ENCODE measurements at regions of chr11 and their contacts with region 1.

Region 1: GRCh38 chr11:85627998-85628770 is at the start of gene TMEM126B:
- DNase-seq: peak; percentile 99
- ATAC-seq: peak; percentile 95
- H3K4me3 Mint-ChIP-seq: peak within 1 kb of the TSS; percentile 98
- H3K27ac Mint-ChIP-seq: peak within 1 kb of the TSS; percentile 100
- H3K4me1 Mint-ChIP-seq: peaks cover 35% of the 10 kb centered on the region
- H3K27me3 Mint-ChIP-seq: no peaks in the 10 kb centered on the region
- total RNA-seq, gene TMEM126B: 62.7 to 74.2 TPM

Region 2: DNA sequence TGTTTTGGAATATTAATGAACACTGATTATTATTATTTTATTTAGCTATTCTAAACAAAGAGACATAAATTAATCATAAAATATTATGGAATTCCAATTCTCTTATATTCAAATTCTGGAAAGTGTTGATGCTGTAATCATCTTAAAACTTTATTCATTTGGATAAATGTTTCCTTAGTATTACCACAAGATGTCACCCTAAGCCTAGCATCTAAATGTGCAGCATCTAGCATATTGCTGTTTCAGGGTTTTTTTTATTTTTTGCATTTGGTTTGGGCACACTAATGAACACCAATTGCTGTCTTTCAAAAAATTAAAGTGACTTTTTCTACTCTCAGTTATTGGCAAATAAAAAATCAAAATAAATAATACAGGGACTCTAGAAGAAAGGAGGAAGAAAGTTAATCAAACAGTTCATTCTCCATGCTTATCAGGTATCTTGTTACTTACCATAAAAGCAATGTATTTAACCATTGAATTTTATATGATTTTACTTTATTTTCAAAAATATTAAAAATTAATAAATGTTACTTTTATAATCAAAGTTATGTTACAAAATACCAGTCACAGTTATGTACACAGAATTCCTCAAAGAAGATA is 32.8 kb before region 1 on chr11:
- CTCF ChIA-PET with region 1: interaction called, 6 read pairs
- POLR2A ChIA-PET with region 1: no interaction called
- intact Hi-C with region 1: loop called (anchors 1 to 2 kb)
- DNase-seq: no peak
- ATAC-seq: peak; percentile 64
- H3K4me3 Mint-ChIP-seq: no peak overlapping the region
- H3K27ac Mint-ChIP-seq: no peak overlapping the region
- H3K4me1 Mint-ChIP-seq: no peaks in the 10 kb centered on the region
- H3K27me3 Mint-ChIP-seq: peaks cover 2% of the 10 kb centered on the region

Region 3: GRCh38 chr11:85752890-85753581 is 124.9 kb after region 1 on chr11:
- CTCF ChIA-PET with region 1: no interaction called
- POLR2A ChIA-PET with region 1: no interaction called
- intact Hi-C with region 1: loop called (anchors 2 kb)
- DNase-seq: peak; percentile 90
- ATAC-seq: peak; percentile 89
- H3K4me3 Mint-ChIP-seq: peak overlapping the region; percentile 47
- H3K27ac Mint-ChIP-seq: peak overlapping the region; percentile 94
- H3K4me1 Mint-ChIP-seq: peaks cover 91% of the 10 kb centered on the region
- H3K27me3 Mint-ChIP-seq: no peaks in the 10 kb centered on the region

Region 4: GRCh38 chr11:86302100-86302793 is 674.1 kb after region 1 on chr11 and contains the start of gene HIKESHI:
- CTCF ChIA-PET with region 1: no interaction called
- POLR2A ChIA-PET with region 1: no interaction called
- intact Hi-C with region 1: loop called (anchors 1 to 10 kb)
- DNase-seq: peak; percentile 97
- ATAC-seq: peak; percentile 99
- H3K4me3 Mint-ChIP-seq: peak within 1 kb of the TSS; percentile 96
- H3K27ac Mint-ChIP-seq: peak within 1 kb of the TSS; percentile 99
- H3K4me1 Mint-ChIP-seq: peaks cover 31% of the 10 kb centered on the region
- H3K27me3 Mint-ChIP-seq: no peaks in the 10 kb centered on the region
- total RNA-seq, gene HIKESHI: 50.2 to 51.3 TPM

Region 5: GRCh38 chr11:87037450-87038234 is 1409.5 kb after region 1 on chr11 and contains the start of gene TMEM135:
- CTCF ChIA-PET with region 1: no interaction called
- POLR2A ChIA-PET with region 1: no interaction called
- intact Hi-C with region 1: loop called in 1 of 2 experiments (anchors 5 kb)
- DNase-seq: peak; percentile 97
- ATAC-seq: peak; percentile 97
- H3K4me3 Mint-ChIP-seq: peak within 1 kb of the TSS; percentile 97
- H3K27ac Mint-ChIP-seq: peak within 1 kb of the TSS; percentile 93
- H3K4me1 Mint-ChIP-seq: peaks cover 40% of the 10 kb centered on the region
- H3K27me3 Mint-ChIP-seq: no peaks in the 10 kb centered on the region
- total RNA-seq, gene TMEM135: 25.5 to 26.0 TPM